AG04449 (cell line): ENCODE measurements at regions of chr1 and their contacts with region 1.

Region 1: DNA sequence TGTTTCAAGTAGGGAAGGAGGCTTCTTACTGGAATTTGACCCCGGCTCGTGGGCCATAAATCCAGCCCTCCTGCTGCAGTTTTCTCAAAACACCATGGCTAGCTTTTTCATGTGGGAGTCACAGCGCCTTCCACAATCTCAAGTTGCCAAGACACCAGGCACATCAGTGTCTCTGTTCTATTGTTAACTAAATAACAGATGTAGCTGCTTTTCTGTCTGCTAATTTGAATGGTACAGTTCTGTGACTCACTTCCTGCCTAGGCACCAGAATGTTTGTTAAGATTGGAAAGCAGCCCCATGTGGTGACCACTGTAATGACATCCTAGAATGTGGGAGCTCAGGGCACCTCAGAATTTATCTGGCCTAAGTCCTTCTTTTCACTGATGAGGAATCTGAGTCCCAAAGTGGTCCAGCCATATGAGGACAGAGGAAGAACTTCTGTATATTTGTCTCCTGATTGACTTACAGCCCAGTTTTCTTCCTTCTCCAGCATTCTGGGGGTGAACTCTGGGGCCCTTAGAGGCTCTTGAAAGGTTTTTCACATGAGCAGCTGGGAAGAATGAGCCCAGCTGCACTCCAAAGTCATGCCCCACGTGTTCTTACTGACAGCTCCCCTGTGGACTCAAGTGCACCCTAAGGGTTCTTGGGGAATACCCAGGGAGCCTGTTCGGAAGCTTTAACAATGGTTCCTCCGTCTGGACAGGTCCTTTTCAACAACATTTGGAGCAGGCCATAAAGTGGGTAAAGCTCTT is 27.5 kb downstream of the TRIM45 start:
- DNase-seq: no peak
- H3K4me3 ChIP-seq: no peak overlapping the region
- CTCF ChIP-seq: peak; percentile 28

Region 2: GRCh38 chr1:117077267-117077666 is 16.8 kb before region 1 on chr1:
- CTCF ChIA-PET with region 1: interaction called, 11 read pairs
- POLR2A ChIA-PET with region 1: interaction called, 7 read pairs
- DNase-seq: peak; percentile 82
- H3K4me3 ChIP-seq: no peak overlapping the region
- CTCF ChIP-seq: no peak